ENCODE measurements at regions of chr1 and their contacts with region 1.

Region 1: GRCh38 chr1:183896466-183897048 is 91.6 kb downstream of the RGL1 start:
- DNase-seq: no peak
- ATAC-seq: no peak
- H3K4me3 ChIP-seq: no peak overlapping the region
- H3K27ac ChIP-seq: no peak overlapping the region
- H3K4me1 ChIP-seq: no peaks in the 10 kb centered on the region
- H3K27me3 ChIP-seq: peaks cover 7 to 12% of the 10 kb centered on the region in 2 experiments; a peak in 3 of 5 replicates
- CTCF ChIP-seq: no peak
- EP300 ChIP-seq: no peak
- POLR2A ChIP-seq: no peak
- RAD21 ChIP-seq: no peak

Region 2: DNA sequence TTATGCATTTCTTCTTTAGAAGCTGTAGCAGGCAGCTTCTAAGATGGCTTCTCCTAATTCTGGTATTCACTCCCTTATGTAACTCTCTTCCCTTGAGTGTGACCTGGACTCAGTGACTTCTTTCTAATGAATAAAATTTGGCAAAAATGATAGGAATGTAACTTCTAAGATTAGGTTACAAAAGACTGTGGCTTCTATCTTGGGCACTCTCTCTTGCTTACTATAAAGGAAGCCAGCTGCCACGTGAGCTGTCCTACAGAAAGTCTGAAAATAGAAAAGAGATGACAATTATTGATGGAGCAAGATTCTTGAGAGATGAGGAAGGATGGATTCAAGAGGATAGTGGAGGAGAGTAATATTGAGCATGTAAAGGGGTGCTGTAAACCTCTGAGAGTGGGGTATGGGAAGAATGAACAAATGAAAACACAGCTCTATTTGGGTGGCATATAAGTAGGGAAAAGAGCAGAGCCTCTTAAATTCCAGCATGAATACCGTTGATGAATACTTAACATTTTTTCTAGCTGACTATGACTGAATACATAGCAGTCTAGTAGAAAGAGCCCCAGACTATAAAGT is 160.5 kb after region 1 on chr1:
- CTCF ChIA-PET with region 1: no interaction called
- POLR2A ChIA-PET with region 1: no interaction called
- in situ Hi-C with region 1: no loop called
- intact Hi-C with region 1: no loop called
- DNase-seq: no peak
- ATAC-seq: no peak
- H3K4me3 ChIP-seq: no peak overlapping the region
- H3K27ac ChIP-seq: no peak overlapping the region
- H3K4me1 ChIP-seq: peaks cover 0 to 12% of the 10 kb centered on the region in 2 experiments; a peak in 4 of 5 replicates
- H3K27me3 ChIP-seq: no peaks in the 10 kb centered on the region
- CTCF ChIP-seq: no peak
- EP300 ChIP-seq: no peak
- POLR2A ChIP-seq: no peak
- RAD21 ChIP-seq: no peak

Region 3: DNA sequence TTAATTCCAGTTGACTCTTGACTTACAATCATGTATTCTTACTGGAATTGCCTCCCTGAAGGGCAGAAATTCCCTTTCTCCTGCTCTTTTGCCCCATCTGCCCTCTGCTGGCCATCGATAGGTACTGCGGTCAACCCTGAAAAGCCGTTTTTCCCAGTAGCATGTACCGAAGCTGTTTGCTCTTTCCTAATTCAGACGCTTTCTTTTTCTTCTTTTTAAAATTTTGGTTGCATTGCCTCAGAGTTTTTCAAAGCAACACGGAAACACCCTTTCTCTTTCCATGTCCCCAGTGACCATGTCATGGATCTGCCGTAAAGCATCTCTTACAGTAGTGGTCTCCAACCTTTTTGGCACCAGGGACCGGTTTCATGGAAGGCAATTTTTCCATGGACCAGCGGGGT is 326.1 kb after region 1 on chr1:
- CTCF ChIA-PET with region 1: interaction called, 4 read pairs
- POLR2A ChIA-PET with region 1: no interaction called
- in situ Hi-C with region 1: loop called (anchors 10 kb)
- intact Hi-C with region 1: no loop called
- DNase-seq: peak; percentile 64 to 71 (median 68)
- ATAC-seq: peak; percentile 77
- H3K4me3 ChIP-seq: no peak overlapping the region
- H3K27ac ChIP-seq: no peak overlapping the region
- H3K4me1 ChIP-seq: no peaks in the 10 kb centered on the region
- H3K27me3 ChIP-seq: peaks cover 14 to 26% of the 10 kb centered on the region in 2 experiments
- CTCF ChIP-seq: peak; percentile 86 to 95 (median 92)
- EP300 ChIP-seq: no peak
- POLR2A ChIP-seq: no peak
- RAD21 ChIP-seq: peak; percentile 87 to 90